ENCODE measurements at regions of chr15 and their contacts with region 1.

Region 1: DNA sequence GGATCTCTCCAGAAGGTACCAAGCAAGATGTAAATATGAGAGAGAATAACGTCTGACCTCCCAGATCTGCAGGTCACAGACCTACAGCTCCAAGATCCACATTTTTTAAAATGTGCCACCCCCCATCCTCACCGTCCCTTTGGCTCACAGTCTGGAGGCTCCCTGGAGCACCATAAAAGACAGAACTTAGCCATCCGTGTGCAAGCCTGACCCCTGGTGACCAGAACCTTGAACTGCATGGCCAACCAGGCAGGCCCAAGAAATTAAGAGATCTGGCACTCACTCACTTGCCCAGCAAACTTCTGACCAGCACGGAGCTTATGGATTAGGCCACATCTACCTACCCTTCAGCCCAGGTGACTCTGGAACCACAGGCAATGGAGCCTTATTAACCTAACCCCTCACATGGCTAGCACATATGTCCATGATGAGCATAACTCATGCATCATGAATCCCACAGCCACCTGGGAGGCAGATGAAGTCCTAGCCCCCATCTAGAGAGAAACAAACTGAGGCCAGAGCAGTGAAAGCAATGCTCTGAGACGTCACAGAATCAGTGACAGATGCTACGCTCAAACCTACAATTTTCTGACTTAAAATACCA is 275.3 kb downstream of the UACA start:
- DNase-seq: peak; percentile 58 to 83 (median 75)
- ATAC-seq: peak; percentile 29
- H3K4me3 ChIP-seq: no peak overlapping the region
- H3K4me3 Mint-ChIP-seq: no peak overlapping the region
- H3K27ac ChIP-seq: no peak overlapping the region
- H3K27ac Mint-ChIP-seq: no peak overlapping the region
- H3K4me1 ChIP-seq: peaks cover 49% of the 10 kb centered on the region
- H3K4me1 Mint-ChIP-seq: peaks cover 67% of the 10 kb centered on the region
- H3K27me3 ChIP-seq: peaks cover 0 to 2% of the 10 kb centered on the region in 2 experiments
- H3K27me3 Mint-ChIP-seq: peaks cover 3% of the 10 kb centered on the region
- CTCF ChIP-seq: peak; percentile 90

Region 2: GRCh38 chr15:69468241-69469121 is 1019.6 kb before region 1 on chr15:
- CTCF ChIA-PET with region 1: interaction called, 5 read pairs
- POLR2A ChIA-PET with region 1: interaction called, 3 read pairs
- intact Hi-C with region 1: loop called (anchors 1 to 2 kb)
- DNase-seq: peak; percentile 72 to 97 (median 84)
- ATAC-seq: peak; percentile 88
- H3K4me3 ChIP-seq: peak overlapping the region in 1 of 2 experiments; percentile 14
- H3K4me3 Mint-ChIP-seq: peak overlapping the region; percentile 60
- H3K27ac ChIP-seq: peak overlapping the region; percentile 76 to 80
- H3K27ac Mint-ChIP-seq: peak overlapping the region; percentile 98
- H3K4me1 ChIP-seq: peaks cover 27% of the 10 kb centered on the region
- H3K4me1 Mint-ChIP-seq: peaks cover 23% of the 10 kb centered on the region
- H3K27me3 ChIP-seq: no peaks in the 10 kb centered on the region
- H3K27me3 Mint-ChIP-seq: no peaks in the 10 kb centered on the region
- CTCF ChIP-seq: no peak

Region 3: GRCh38 chr15:69713726-69714559 is 774.2 kb before region 1 on chr15:
- CTCF ChIA-PET with region 1: no interaction called
- POLR2A ChIA-PET with region 1: interaction called, 3 read pairs
- intact Hi-C with region 1: loop called in 1 of 2 experiments (anchors 5 kb)
- DNase-seq: peak; percentile 34 to 95 (median 77)
- ATAC-seq: peak; percentile 89
- H3K4me3 ChIP-seq: no peak overlapping the region
- H3K4me3 Mint-ChIP-seq: peak overlapping the region; percentile 20
- H3K27ac ChIP-seq: peak overlapping the region in 1 of 2 experiments; percentile 68
- H3K27ac Mint-ChIP-seq: peak overlapping the region; percentile 89
- H3K4me1 ChIP-seq: peaks cover 47% of the 10 kb centered on the region
- H3K4me1 Mint-ChIP-seq: peaks cover 66% of the 10 kb centered on the region
- H3K27me3 ChIP-seq: no peaks in the 10 kb centered on the region
- H3K27me3 Mint-ChIP-seq: no peaks in the 10 kb centered on the region
- CTCF ChIP-seq: no peak

Region 4: DNA sequence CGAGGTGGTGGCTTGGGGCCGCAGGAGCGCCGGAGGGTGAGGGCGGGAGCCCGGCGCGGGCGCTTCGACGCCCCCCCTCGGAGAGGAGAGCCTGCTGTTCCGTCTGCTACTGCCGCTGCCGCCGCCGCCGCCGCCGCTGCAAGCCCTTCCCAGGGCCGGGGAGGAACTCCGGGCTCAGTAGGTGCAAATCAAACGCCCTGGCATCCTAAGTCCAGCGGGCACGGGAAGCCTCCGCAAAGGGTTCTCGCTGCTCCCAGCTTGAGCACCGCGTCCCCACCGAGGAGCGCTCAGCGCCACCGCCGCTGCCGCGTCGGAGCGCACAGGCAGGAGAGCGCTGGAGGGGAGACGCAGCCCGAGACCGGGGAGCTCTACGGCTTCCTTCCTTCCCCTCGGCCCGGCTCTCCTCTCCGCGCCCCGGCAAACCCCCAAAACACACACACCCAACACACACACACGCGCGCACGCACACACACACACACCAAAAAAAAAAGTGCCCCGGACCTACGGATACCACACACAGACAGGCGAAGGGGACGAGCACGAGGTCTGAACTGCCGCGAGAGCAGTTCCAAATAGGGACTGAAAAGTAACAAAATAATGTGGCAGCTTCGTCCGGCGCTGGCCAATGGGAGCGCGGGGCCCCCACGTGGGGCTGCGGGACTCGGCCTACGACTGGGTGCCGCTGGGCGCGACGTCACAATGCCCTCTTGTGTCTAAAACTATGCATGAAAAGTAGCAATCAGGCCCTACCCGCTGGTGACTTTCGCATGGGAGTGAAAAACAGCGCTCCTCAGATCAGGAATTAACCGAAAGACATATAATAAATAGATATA is 390.6 kb before region 1 on chr15 and contains the start of gene TLE3:
- CTCF ChIA-PET with region 1: interaction called, 3 read pairs
- POLR2A ChIA-PET with region 1: interaction called, 5 read pairs
- intact Hi-C with region 1: loop called (anchors 2 to 5 kb)
- DNase-seq: peak; percentile 93 to 99 (median 98)
- ATAC-seq: peak; percentile 55
- H3K4me3 ChIP-seq: peak within 1 kb of the TSS; percentile 81 to 89
- H3K4me3 Mint-ChIP-seq: peak within 1 kb of the TSS; percentile 99
- H3K27ac ChIP-seq: peak within 1 kb of the TSS; percentile 90
- H3K27ac Mint-ChIP-seq: peak within 1 kb of the TSS; percentile 98
- H3K4me1 ChIP-seq: peaks cover 51% of the 10 kb centered on the region
- H3K4me1 Mint-ChIP-seq: peaks cover 53% of the 10 kb centered on the region
- H3K27me3 ChIP-seq: peaks cover 0 to 6% of the 10 kb centered on the region in 2 experiments
- H3K27me3 Mint-ChIP-seq: no peaks in the 10 kb centered on the region
- CTCF ChIP-seq: peak; percentile 35
- total RNA-seq, gene TLE3: 198 to 201 TPM

Region 5: DNA sequence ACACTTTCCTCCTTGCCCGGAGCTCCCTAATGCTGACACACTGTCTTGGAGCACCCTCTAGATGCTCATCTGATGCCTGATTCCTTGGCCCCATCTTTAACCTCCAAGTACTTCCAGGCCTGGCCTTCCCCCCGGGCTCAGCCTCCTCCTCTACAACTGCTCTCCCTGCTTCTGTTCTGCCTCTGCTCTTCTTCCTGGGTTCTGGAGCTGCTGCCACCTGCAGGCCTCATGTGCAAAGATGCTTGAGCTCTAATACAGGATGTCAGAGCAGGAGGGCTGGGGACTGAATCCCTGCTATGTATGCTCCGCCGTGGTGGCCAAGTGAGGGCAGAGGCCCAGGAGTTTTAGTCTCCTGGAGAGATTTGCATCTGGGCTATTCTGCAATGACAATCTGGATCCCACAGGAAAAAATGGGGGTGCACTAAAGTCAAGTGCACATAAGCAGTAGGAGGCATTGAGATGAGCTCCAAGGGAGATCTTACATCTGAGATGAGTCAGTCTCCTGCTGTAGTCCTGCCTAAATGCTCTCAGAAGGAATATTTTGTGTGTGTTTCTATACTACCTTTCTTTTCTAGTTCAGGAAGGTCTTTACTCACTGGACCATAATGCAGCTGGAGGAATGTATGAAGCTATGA is 21.1 kb before region 1 on chr15:
- CTCF ChIA-PET with region 1: interaction called, 43 read pairs
- POLR2A ChIA-PET with region 1: interaction called, 3 read pairs
- intact Hi-C with region 1: no loop called
- DNase-seq: peak in 7 of 9 experiments; percentile 35 to 71 (median 55)
- ATAC-seq: peak; percentile 79
- H3K4me3 ChIP-seq: no peak overlapping the region
- H3K4me3 Mint-ChIP-seq: no peak overlapping the region
- H3K27ac ChIP-seq: no peak overlapping the region
- H3K27ac Mint-ChIP-seq: no peak overlapping the region
- H3K4me1 ChIP-seq: no peaks in the 10 kb centered on the region
- H3K4me1 Mint-ChIP-seq: peaks cover 5% of the 10 kb centered on the region
- H3K27me3 ChIP-seq: no peaks in the 10 kb centered on the region
- H3K27me3 Mint-ChIP-seq: peaks cover 8% of the 10 kb centered on the region
- CTCF ChIP-seq: peak; percentile 58

Region 6: DNA sequence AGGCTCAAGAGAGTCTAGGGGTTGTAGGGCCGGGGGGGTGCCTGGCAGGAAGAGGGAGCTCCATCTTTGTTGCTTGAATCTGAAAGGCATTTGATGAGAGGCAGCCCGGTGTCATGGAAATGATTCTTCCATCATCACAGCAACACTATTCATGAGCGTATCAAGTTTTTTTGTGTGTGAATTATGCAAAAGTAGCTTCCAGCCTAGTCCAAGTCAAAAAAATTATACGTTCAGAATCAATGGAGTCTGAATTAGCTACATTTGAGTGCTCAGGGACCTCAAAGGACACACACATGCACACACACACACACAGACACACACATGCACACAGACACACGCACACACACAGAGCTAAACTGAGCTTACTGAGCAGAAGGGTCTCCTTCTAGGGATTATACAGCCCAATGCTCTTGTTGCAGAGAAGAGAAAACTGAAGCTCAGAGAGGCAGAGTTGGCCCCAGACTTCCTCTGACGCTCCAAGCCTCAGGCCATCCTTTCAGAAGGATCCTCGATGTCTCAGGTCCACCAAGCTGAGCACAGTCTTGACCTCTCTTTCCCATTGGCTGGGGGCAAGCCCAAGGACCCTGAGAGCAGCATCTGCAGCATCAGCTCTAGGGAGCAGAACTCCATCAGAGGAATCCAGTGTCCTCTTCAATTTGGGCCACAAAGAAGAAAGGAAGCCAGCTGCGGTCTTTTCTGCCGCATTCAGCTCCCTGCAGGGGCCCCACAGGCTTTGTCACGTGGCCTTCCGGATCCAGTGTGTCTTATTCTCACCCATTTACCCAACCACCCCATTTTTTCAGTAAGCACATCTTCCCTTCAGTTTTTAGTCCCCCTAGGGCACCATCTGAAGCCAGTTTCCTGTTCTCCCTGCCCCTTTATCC is 47.2 kb after region 1 on chr15:
- CTCF ChIA-PET with region 1: interaction called, 19 read pairs
- POLR2A ChIA-PET with region 1: interaction called, 18 read pairs
- intact Hi-C with region 1: loop called (anchors 2 to 5 kb)
- DNase-seq: peak; percentile 25 to 81 (median 67)
- ATAC-seq: peak; percentile 77
- H3K4me3 ChIP-seq: peak overlapping the region; percentile 63 to 67
- H3K4me3 Mint-ChIP-seq: peak overlapping the region; percentile 86
- H3K27ac ChIP-seq: peak overlapping the region; percentile 61 to 78
- H3K27ac Mint-ChIP-seq: peak overlapping the region; percentile 94
- H3K4me1 ChIP-seq: peaks cover 46% of the 10 kb centered on the region
- H3K4me1 Mint-ChIP-seq: peaks cover 75% of the 10 kb centered on the region
- H3K27me3 ChIP-seq: no peaks in the 10 kb centered on the region
- H3K27me3 Mint-ChIP-seq: no peaks in the 10 kb centered on the region
- CTCF ChIP-seq: no peak

Region 7: DNA sequence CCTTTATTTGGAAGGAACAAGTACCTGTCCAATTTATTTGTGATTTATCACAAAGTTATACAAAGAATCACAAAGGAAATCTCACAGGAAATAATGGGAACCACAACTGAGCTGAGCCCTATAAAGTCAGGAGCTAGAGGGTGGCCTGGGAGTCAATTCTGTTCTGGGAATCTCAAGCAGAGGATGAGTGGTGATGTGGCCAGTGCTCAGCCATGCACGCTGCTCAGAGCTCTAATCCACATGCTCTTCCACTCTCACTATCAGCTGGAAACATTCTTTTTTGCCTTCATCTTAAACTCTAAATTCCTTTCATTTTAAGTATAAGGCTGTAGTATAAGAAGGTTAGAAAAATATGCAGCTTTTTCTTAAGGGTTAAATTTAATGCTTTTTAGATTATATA is 238.6 kb after region 1 on chr15:
- CTCF ChIA-PET with region 1: no interaction called
- POLR2A ChIA-PET with region 1: no interaction called
- intact Hi-C with region 1: no loop called
- DNase-seq: no peak
- ATAC-seq: no peak
- H3K4me3 ChIP-seq: no peak overlapping the region
- H3K4me3 Mint-ChIP-seq: no peak overlapping the region
- H3K27ac ChIP-seq: no peak overlapping the region
- H3K27ac Mint-ChIP-seq: no peak overlapping the region
- H3K4me1 ChIP-seq: no peaks in the 10 kb centered on the region
- H3K4me1 Mint-ChIP-seq: no peaks in the 10 kb centered on the region
- H3K27me3 ChIP-seq: no peaks in the 10 kb centered on the region
- H3K27me3 Mint-ChIP-seq: peaks cover 18% of the 10 kb centered on the region
- CTCF ChIP-seq: no peak